CD4-positive, alpha-beta T cell (primary cell): ENCODE measurements at regions of chr17 and their contacts with region 1.

Region 1: GRCh38 chr17:40340880-40341807 is 23.4 kb downstream of the GJD3 start:
- DNase-seq: peak; percentile 76 to 96 (median 85)
- ATAC-seq: peak; percentile 78
- H3K4me3 ChIP-seq: peak overlapping the region; percentile 72
- H3K4me3 Mint-ChIP-seq: peak overlapping the region; percentile 83
- H3K27ac ChIP-seq: peak overlapping the region; percentile 73 to 90
- H3K27ac Mint-ChIP-seq: peak overlapping the region; percentile 93
- H3K4me1 ChIP-seq: peaks cover 89% of the 10 kb centered on the region
- H3K4me1 Mint-ChIP-seq: peaks cover 76% of the 10 kb centered on the region
- H3K27me3 ChIP-seq: no peaks in the 10 kb centered on the region
- H3K27me3 Mint-ChIP-seq: no peaks in the 10 kb centered on the region
- CTCF ChIP-seq: peak; percentile 55

Region 2: DNA sequence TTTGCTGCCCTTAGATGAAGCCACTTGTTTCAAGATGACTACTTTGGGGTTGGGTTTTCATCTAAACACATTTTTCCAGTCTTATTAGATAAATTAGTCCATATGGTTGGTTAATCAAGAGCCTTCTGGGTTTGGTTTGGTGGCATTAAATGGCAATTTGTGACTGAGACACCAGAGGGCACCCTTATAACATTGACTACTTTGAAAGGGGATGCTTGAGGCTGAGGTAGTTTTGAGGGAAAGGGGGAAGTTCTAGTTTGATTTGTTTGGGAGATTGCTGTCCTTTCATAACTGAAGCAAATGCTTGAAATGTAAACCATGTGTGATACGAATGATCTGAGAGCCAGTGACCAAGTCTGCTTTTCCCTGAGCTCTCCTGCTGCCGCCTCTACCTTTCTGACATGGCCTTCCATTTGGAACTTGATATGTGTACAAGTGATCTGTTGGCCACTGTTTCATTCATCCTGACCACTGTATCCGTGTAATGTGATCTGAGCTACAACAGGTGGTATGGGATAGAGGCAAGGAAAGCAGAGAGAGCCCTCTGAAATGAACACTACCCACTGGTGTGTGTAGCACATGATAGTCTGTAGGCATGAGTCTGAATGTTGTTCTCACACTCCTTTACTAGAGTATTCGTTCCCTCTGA is 38.0 kb before region 1 on chr17:
- CTCF ChIA-PET with region 1: interaction called, 12 read pairs
- POLR2A ChIA-PET with region 1: interaction called, 11 read pairs
- intact Hi-C with region 1: loop called (anchors 1 kb)
- DNase-seq: peak in 8 of 14 experiments; percentile 46 to 83 (median 61)
- ATAC-seq: peak; percentile 67
- H3K4me3 ChIP-seq: no peak overlapping the region
- H3K4me3 Mint-ChIP-seq: no peak overlapping the region
- H3K27ac ChIP-seq: no peak overlapping the region
- H3K27ac Mint-ChIP-seq: no peak overlapping the region
- H3K4me1 ChIP-seq: peaks cover 33% of the 10 kb centered on the region
- H3K4me1 Mint-ChIP-seq: peaks cover 16% of the 10 kb centered on the region
- H3K27me3 ChIP-seq: no peaks in the 10 kb centered on the region
- H3K27me3 Mint-ChIP-seq: no peaks in the 10 kb centered on the region
- CTCF ChIP-seq: peak; percentile 93

Region 3: DNA sequence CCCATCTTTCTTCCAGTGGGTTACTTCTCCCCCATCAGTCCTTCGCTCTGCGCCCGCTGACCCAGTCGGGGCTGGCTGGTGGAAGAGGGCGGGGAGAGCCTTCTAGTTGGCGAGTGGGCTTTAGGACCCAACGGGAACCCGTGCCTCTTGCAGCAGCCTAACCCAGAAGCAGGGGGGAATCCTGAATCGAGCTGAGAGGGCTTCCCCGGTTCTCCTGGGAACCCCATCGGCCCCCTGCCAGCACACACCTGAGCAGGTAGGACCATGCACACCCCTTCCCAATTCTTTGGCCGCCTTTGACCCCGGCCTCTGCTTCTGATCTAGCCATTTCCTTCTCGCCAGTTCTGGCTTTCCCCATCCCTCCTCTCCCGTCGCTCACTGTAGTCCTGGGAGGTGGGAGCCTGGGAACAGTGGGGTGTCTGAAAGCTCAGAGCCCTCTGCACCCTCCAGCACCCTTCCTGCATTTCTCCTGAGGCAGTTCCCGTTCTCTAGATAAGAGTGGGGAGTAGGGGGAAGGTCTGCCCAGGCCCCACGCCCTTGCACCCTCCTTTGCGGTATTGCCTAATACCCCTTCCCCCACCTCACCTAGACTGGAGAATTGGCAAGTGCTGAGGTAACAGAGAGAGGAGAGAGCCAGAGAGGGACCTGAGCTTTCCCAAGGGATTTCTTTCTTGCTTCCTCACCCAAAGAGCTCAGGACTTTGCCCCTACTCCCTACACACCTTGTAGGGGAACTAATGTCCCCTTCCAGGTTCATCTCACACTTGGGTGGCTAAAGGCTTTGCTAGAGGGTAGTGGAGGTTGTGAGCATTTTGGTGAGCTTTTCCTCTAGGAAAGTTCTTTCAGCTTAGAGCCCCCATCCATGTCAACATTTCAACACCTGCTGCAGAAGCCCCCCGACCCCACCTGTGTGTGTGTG is 31.9 kb before region 1 on chr17 and contains the start of gene RARA:
- CTCF ChIA-PET with region 1: interaction called, 12 read pairs
- POLR2A ChIA-PET with region 1: interaction called, 11 read pairs
- intact Hi-C with region 1: no loop called
- DNase-seq: peak in 3 of 14 experiments; percentile 37 to 54 (median 50)
- ATAC-seq: peak; percentile 48
- H3K4me3 ChIP-seq: peak within 1 kb of the TSS; percentile 24
- H3K4me3 Mint-ChIP-seq: no peak within 1 kb of the TSS
- H3K27ac ChIP-seq: no peak within 1 kb of the TSS
- H3K27ac Mint-ChIP-seq: no peak within 1 kb of the TSS
- H3K4me1 ChIP-seq: peaks cover 69% of the 10 kb centered on the region
- H3K4me1 Mint-ChIP-seq: peaks cover 31% of the 10 kb centered on the region
- H3K27me3 ChIP-seq: no peaks in the 10 kb centered on the region
- H3K27me3 Mint-ChIP-seq: no peaks in the 10 kb centered on the region
- CTCF ChIP-seq: no peak
- total RNA-seq, gene RARA: 114 to 115 TPM

Region 4: GRCh38 chr17:40323391-40324381 is 17.5 kb before region 1 on chr17:
- CTCF ChIA-PET with region 1: interaction called, 22 read pairs
- POLR2A ChIA-PET with region 1: interaction called, 117 read pairs
- intact Hi-C with region 1: loop called (anchors 1 kb)
- DNase-seq: peak in 12 of 14 experiments; percentile 32 to 97 (median 60)
- ATAC-seq: peak; percentile 15
- H3K4me3 ChIP-seq: peak overlapping the region; percentile 96
- H3K4me3 Mint-ChIP-seq: peak overlapping the region; percentile 95
- H3K27ac ChIP-seq: peak overlapping the region; percentile 99
- H3K27ac Mint-ChIP-seq: peak overlapping the region; percentile 99
- H3K4me1 ChIP-seq: peaks cover 99% of the 10 kb centered on the region
- H3K4me1 Mint-ChIP-seq: peaks cover 98% of the 10 kb centered on the region
- H3K27me3 ChIP-seq: no peaks in the 10 kb centered on the region
- H3K27me3 Mint-ChIP-seq: no peaks in the 10 kb centered on the region
- CTCF ChIP-seq: no peak

Region 5: DNA sequence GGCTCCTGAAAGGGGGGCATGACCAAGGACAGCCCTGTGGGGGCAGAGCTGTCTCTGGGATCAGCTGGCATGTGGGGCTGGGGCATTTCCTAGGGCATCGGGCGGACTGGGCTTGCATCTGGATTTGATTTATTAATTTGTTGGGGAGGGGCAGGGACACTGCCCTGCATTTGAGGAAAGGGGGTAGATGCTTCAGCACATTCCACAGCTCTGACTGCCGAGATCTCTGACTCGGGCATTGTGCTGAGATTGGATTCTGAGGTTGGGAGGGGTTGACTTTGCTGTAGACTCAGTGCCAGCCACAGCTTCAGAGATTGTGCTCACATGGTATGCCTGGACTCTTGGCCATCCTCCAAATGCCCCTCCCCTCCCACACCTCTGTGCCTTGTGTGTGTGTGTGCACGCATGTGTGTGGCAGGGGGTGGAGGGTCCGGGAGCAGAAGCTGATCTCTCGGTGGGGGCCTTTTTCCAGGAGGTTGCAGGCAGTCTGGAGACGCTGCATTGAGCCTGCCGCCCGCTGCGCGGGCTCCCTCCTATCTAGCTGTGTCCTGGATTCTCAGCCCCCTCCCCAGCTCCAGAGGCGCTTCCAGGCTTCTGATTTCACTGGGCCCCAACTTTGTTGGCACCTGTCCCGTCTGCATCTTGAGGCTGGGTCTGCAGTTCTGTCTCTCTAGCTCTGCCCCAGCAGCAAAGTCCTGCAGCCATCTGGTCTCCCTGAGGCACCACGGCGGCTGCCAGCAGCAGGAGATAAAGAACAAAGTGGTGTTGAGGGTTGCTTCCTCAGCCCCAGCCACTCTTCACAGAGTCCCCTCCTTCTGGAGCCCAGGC is 117.0 kb after region 1 on chr17:
- CTCF ChIA-PET with region 1: no interaction called
- POLR2A ChIA-PET with region 1: no interaction called
- intact Hi-C with region 1: no loop called
- DNase-seq: no peak
- ATAC-seq: no peak
- H3K4me3 ChIP-seq: no peak overlapping the region
- H3K4me3 Mint-ChIP-seq: no peak overlapping the region
- H3K27ac ChIP-seq: no peak overlapping the region
- H3K27ac Mint-ChIP-seq: no peak overlapping the region
- H3K4me1 ChIP-seq: no peaks in the 10 kb centered on the region
- H3K4me1 Mint-ChIP-seq: no peaks in the 10 kb centered on the region
- H3K27me3 ChIP-seq: no peaks in the 10 kb centered on the region
- H3K27me3 Mint-ChIP-seq: no peaks in the 10 kb centered on the region
- CTCF ChIP-seq: no peak